Ascending aorta (tissue), 2 donors: ENCODE measurements at regions of chr4 and their contacts with region 1.

Region 1: DNA sequence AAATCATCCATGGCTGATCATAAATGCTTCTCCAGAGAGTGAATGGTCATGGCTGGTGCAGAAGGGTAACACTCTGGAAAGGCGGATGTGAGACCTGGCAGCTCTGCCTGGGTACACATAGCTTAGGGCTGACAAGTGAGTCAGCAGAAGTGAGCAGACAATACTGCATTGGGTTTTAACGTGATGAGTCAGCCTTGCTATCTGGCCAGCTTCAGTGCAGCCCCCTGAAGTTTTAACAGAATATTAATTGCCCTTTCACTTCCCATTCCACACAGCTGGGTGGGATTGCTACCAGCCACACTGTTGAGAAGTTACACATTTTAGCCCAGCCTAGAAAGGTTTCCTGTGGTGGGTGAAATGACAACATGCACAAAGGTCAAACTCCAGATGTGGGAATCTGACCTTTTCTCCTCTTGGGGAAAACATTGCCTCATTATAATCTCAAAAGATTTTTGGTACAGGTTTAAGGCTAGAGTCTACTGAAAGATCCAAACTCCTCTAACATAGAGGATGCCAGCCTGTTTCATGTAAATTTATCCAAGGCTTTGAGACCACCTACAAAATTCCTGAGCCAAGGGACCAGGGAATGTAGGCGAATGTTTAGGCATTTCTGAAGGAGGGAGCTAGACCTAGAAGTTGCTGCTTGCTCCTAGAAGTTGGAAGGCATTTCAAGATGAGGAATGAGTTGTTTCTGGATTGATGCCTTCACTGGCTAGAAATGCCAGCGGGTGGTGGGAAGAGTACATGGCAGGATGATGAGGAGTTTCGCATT is 230.3 kb upstream of the PGRMC2 start:
- DNase-seq: peak in 1 of 2 donors; percentile 87
- H3K4me3 ChIP-seq: no peak overlapping the region
- H3K27ac ChIP-seq: peak overlapping the region; percentile 84 to 88
- H3K4me1 ChIP-seq: peaks cover 6 to 49% of the 10 kb centered on the region in 2 donors
- H3K27me3 ChIP-seq: no peaks in the 10 kb centered on the region
- CTCF ChIP-seq: no peak

Region 2: DNA sequence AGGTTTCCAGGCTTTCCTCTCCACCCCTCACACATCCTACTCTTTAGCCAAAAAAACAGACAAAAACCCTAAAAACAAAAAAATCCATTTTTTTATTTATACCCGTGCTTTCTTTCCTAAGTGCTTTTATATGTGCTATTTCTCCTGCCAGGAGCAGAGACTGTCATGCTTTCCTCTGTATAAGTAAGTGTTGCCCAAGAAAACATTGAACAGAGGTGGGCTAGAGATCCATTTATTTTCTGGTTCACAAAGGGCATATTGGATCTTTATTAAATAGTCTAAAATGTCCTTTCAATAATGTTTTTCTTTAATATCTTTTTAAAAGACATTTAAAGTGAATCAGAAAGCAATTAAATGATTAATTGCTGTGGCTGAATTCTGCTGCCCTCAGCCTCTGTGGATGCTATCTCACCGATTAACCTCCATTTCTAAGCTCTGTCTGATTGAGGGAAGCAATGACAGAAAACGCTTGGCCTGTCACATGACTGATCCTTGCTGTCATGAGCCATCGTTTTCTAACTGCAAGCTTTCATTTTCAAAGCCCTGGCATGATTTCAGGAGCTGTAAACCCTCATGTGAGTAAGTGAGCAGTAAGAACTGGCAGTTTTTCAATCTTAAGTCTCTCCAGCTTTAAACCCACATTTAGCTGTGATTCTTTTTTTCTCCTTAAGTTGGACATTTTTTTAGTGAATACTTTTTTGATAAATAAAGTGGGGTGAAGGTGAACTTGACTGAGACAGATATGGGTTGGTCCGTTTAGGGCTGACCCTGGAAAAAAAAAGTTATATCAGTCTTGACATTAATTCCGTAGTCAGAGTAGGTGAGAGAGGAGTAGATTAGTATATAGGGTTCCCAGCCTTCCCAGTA is 49.6 kb before region 1 on chr4:
- intact Hi-C with region 1: loop called (anchors 5 kb)
- DNase-seq: peak; percentile 33 to 85
- H3K4me3 ChIP-seq: peak overlapping the region; percentile 22 to 40
- H3K27ac ChIP-seq: peak overlapping the region; percentile 64 to 72
- H3K4me1 ChIP-seq: peaks cover 4 to 10% of the 10 kb centered on the region in 2 donors
- H3K27me3 ChIP-seq: no peaks in the 10 kb centered on the region
- CTCF ChIP-seq: no peak

Region 3: DNA sequence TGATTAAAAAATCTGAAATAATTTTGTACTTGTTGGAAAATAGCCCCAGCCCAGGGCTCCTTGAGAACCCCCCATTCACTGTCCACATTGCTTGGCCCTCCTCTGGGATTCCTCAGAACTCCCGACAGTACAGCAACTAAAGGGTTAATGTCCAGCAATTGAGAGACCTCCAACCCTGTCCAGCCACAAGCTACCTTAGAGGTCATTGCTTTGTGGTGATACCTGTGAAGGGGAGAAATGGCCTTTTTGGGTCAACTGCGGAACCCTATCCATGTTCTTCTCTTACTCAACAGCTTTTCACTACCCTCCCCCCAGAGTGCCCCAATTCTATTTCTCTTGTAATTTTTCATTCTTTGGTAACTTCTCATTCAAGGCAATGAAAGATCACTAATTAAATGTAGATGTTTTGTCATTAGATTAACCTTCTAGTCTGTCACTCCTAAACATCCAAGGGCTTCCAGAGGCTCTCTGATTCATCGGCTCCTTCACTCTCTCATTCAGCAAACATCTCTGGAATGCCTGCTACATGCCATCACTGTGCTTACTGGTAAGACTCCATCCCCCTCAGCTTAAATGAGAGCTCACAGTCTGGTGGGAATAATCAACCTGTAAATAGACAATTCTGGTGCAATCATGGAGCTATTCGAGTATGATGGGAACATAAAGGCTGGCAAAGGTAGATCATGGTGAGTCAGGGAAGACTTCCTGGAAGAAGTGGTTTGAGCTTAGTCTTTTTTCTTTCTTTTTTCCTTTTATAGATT is 11.0 kb after region 1 on chr4:
- intact Hi-C with region 1: loop called (anchors 1 kb)
- DNase-seq: peak; percentile 34 to 87
- H3K4me3 ChIP-seq: no peak overlapping the region
- H3K27ac ChIP-seq: peak overlapping the region; percentile 82 to 83
- H3K4me1 ChIP-seq: peaks cover 8 to 35% of the 10 kb centered on the region in 2 donors
- H3K27me3 ChIP-seq: no peaks in the 10 kb centered on the region
- CTCF ChIP-seq: no peak

Region 4: GRCh38 chr4:128553686-128554515 is 36.0 kb after region 1 on chr4:
- intact Hi-C with region 1: loop called (anchors 1 kb)
- DNase-seq: no peak
- H3K4me3 ChIP-seq: peak overlapping the region; percentile 61 to 84
- H3K27ac ChIP-seq: peak overlapping the region; percentile 89 to 94
- H3K4me1 ChIP-seq: peaks cover 4 to 9% of the 10 kb centered on the region in 2 donors
- H3K27me3 ChIP-seq: no peaks in the 10 kb centered on the region
- CTCF ChIP-seq: no peak

Region 5: GRCh38 chr4:128564081-128564630 is 46.2 kb after region 1 on chr4:
- intact Hi-C with region 1: no loop called
- DNase-seq: no peak
- H3K4me3 ChIP-seq: no peak overlapping the region
- H3K27ac ChIP-seq: peak overlapping the region in 1 of 2 donors; percentile 44
- H3K4me1 ChIP-seq: no peaks in the 10 kb centered on the region
- H3K27me3 ChIP-seq: no peaks in the 10 kb centered on the region
- CTCF ChIP-seq: no peak

Region 6: DNA sequence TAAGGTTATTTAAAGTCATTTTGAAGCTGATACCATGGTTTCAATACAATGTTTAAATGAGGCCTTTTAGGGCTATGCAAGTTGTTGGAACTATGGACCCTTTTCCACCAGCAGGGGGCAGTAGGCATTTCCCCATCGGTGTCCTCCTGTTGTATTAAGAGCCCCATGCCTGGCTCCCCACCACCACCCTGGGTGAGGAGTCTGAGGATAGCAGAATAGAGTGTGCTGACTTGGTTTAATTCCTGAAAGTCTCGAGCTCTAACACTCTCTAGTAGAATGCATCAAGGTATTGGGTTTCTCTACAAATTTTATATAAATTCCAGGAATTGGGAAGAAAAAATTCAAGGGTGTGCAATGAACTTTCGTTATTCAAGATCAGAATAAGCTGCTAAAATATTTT is 56.8 kb after region 1 on chr4:
- intact Hi-C with region 1: loop called (anchors 5 kb)
- DNase-seq: peak in 1 of 2 donors; percentile 78
- H3K4me3 ChIP-seq: no peak overlapping the region
- H3K27ac ChIP-seq: no peak overlapping the region
- H3K4me1 ChIP-seq: peaks cover 6 to 17% of the 10 kb centered on the region in 2 donors
- H3K27me3 ChIP-seq: no peaks in the 10 kb centered on the region
- CTCF ChIP-seq: peak in 2 of 3 experiments; percentile 39 to 42

Region 7: DNA sequence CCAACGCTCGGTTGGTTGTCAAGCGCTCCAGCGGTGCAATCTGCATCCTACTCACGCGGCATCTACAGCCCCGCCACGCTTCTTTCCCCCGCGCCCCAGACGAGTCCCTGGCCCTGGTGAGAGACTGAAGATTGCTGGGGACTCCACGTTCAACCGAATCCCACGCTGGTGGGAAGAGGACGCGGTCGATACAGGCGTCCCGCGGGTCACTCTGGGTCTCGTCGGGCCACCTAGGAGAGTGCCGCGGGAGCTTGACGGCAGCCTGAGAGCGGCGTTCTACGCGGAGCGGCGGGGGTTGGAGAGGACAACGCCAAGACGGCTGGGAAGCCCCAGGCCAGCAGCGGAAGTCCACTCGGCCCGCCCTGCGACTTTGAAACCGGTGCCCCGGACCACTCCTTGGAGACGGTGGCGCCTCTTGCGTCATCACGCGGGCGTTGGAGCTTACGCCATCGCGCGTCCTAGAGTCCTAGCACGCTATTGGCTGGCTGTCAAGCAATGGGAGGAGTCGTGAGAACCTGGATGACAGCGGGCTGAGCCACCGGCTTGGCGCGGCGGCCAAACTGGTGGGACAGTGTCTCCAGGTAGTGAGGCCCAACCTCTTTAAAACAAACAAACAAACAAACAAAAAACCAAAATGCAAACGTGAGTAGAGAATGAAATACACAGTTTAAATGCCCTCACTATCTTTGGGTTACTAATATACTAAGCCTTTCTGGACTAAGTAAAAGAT is 575.4 kb after region 1 on chr4 and contains the start of gene SCLT1:
- intact Hi-C with region 1: loop called (anchors 10 kb)
- DNase-seq: peak; percentile 92 to 99
- H3K4me3 ChIP-seq: peak within 1 kb of the TSS; percentile 74 to 75
- H3K27ac ChIP-seq: peak within 1 kb of the TSS; percentile 91 to 92
- H3K4me1 ChIP-seq: peaks cover 0 to 14% of the 10 kb centered on the region in 2 donors
- H3K27me3 ChIP-seq: no peaks in the 10 kb centered on the region
- CTCF ChIP-seq: no peak
- total RNA-seq, gene SCLT1: 7.0 TPM

Region 8: DNA sequence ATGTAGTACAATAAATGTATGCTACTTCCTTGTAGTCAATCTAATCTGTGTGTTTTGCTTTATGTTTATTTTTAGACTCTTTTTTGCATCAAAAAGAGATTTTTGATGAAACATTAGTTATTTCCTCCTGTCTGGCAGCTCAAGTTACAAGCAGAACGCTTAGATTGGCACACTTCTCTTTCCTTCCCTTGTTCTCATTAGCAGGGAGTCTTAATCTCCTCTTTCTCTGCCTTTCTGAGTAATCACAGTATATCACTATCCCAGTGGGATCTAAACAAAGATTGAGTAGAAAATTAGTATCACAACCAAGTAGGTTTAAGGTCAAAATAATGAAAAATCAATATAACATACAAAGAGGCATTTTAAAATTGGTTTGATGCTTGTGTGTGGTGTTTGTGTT is 1770.7 kb after region 1 on chr4:
- intact Hi-C with region 1: no loop called
- DNase-seq: no peak
- H3K4me3 ChIP-seq: no peak overlapping the region
- H3K27ac ChIP-seq: no peak overlapping the region
- H3K4me1 ChIP-seq: no peaks in the 10 kb centered on the region
- H3K27me3 ChIP-seq: no peaks in the 10 kb centered on the region
- CTCF ChIP-seq: no peak